ENCODE measurements at regions of chr17 and their contacts with region 1.

Region 1: DNA sequence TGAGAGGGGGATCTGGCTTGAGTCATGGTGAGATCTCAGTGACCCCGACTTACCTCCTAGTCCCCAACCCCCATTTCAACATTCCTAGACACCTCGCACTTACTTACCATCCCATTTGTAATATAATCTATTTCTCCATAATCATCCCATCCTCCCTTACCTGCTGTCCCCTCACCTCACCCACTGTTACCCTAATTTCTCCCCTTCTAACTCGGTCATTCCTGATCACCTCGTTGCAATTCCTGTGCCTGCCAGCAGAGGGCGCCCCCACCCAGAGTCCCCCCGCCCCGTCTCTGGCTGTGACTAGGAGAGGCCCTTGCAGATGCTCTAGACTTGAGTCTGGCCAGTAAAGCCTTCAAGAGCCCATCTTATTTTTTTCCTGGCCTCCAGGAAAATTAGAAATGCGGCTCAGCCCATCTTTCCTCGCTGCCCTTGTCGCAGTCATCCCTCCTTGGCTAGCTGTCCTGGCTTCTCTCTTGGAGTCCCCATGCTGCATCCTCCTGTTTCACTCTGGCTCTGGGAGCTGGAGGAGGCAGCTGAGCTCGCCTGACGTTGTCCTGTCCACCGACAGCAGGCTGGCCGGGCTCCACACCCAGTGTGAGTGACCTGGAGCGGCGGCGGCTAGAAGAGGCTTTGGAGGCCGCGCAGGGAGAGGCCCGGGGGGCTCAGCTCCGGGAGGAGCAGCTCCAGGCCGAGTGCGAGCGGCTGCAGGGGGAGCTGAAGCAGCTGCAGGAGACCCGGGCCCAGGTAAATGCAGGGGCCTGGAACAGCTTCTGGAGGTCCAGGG is 5.0 kb downstream of the TBKBP1 start:
- DNase-seq: no peak
- H3K4me3 ChIP-seq: no peak overlapping the region
- CTCF ChIP-seq: peak; percentile 80

Region 2: GRCh38 chr17:47604598-47604927 is 94.4 kb before region 1 on chr17:
- CTCF ChIA-PET with region 1: no interaction called
- POLR2A ChIA-PET with region 1: no interaction called
- DNase-seq: no peak
- H3K4me3 ChIP-seq: no peak overlapping the region
- CTCF ChIP-seq: no peak

Region 3: GRCh38 chr17:47708863-47709541 is 10.1 kb after region 1 on chr17:
- CTCF ChIA-PET with region 1: interaction called, 104 read pairs
- POLR2A ChIA-PET with region 1: no interaction called
- DNase-seq: no peak
- H3K4me3 ChIP-seq: no peak overlapping the region
- CTCF ChIP-seq: no peak

Region 4: DNA sequence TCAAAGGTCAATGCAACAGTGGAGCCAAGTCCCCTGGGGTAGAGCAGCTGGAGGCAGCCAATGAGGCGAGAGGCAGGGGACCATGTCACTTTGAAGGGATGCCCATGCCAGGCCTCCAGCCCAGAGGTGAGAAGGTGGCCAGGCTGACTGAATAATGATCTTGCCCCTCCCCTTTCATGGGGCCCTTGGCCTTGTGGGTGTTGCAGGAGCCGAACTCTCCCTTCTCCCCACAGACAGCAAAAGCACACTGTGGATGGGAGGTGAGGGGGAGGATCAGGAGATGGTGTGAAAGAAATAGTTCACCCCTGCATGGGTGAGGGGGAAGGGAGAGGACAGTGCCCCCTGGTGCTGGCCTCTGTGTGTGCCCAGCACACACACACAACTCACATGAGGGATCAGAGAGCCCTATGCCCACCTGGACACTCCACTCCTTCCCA is 18.3 kb after region 1 on chr17:
- CTCF ChIA-PET with region 1: interaction called, 104 read pairs
- POLR2A ChIA-PET with region 1: no interaction called
- DNase-seq: no peak
- H3K4me3 ChIP-seq: no peak overlapping the region
- CTCF ChIP-seq: peak; percentile 46

Region 5: GRCh38 chr17:47742319-47743181 is 43.6 kb after region 1 on chr17:
- CTCF ChIA-PET with region 1: interaction called, 14 read pairs
- POLR2A ChIA-PET with region 1: no interaction called
- DNase-seq: no peak
- H3K4me3 ChIP-seq: no peak overlapping the region
- CTCF ChIP-seq: peak; percentile 30

Region 6: GRCh38 chr17:47802341-47803022 is 103.5 kb after region 1 on chr17:
- CTCF ChIA-PET with region 1: interaction called, 16 read pairs
- POLR2A ChIA-PET with region 1: no interaction called
- DNase-seq: no peak
- H3K4me3 ChIP-seq: no peak overlapping the region
- CTCF ChIP-seq: peak; percentile 69

Region 7: DNA sequence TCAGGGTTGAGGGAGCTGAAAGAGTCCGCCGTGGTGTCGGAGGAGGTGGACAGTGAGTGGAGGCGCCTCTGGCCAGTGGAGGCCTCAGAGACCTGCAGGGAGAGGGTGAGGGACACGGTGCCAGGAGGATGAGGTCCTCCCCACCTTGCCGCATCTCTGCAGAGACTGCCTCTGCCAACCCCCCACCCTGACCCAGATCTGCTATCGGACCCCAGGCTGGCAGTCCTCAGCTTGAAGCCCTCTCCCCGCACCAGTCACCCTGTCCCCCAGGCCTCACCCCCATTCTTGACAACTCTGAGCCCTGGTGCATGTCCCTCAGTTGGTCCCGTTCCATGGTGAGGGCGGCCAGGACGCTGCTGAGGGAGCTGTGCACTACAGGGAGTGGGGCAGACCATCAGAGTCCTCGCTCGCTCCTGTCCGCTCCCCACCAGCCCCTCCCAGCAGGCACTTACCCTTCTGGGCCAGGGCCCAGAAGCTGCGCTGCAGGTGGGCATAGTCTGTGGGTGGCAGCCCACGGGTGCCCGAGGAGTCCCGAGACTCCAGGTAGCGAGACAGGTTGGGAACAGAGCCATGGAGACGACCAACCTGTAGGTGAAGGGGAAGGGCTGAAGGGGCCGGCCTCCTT is 117.3 kb after region 1 on chr17:
- CTCF ChIA-PET with region 1: no interaction called
- POLR2A ChIA-PET with region 1: no interaction called
- DNase-seq: no peak
- H3K4me3 ChIP-seq: no peak overlapping the region
- CTCF ChIP-seq: no peak

Region 8: GRCh38 chr17:47895856-47896671 is 197.1 kb after region 1 on chr17 and contains the start of gene SP2:
- CTCF ChIA-PET with region 1: no interaction called
- POLR2A ChIA-PET with region 1: no interaction called
- DNase-seq: peak; percentile 100
- H3K4me3 ChIP-seq: peak within 1 kb of the TSS; percentile 96
- CTCF ChIP-seq: peak; percentile 10